GM23248 (cell line): ENCODE measurements at regions of chr1 and their contacts with region 1.

Region 1: DNA sequence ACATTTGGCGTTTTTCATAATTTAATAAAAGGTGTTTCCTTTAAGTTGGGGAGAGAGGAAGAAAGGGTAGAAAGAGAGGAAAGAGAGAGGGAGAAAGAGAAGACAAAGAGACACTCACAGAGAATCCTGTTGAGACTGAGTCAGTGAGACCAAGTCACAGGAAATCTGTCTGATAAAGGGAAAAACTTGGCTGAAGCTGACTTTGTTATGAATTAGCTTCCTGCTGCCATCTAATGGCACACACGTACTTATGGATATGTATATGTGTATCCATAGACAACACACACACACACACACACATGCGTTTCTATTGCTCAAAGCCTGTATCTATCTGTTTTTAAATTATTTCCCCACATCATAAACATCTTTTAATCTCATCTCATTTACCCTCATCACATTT is 42.5 kb upstream of the DISC1 start:
- DNase-seq: peak; percentile 80
- H3K4me3 ChIP-seq: no peak overlapping the region
- H3K27ac ChIP-seq: no peak overlapping the region
- H3K4me1 ChIP-seq: peaks cover 4% of the 10 kb centered on the region
- H3K27me3 ChIP-seq: no peaks in the 10 kb centered on the region

Region 2: DNA sequence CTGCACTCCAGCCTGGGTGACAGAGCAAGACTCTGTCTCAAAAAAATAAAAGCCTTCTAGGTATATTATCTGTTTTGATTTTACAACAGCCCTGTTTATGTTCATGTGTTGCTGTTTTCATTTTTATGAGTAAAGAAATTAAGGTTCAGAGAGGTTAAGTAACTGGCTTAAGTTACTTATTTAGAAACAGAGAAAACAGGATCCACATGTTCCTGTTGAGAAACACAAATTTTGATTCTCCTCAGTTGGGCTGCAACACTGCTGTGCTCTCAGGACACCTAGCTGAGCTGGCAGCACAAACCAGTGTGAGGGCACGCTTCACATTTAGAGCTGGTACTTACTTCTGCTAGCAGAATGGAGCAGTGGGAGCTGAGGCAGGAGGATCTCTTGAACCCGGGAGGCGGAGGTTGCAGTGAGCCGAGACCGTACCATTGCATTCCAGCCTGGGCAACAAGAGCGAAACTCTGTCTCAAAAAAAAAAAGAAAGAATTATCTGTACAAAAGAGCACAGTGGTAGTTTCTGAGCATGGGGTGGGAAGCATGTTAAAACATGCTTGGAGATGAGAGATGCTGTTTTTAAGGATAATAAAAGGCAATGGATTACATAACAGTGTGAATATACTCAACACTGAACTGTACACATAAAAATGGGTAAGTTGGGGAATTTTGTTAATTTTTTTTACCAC is 243.7 kb before region 1 on chr1:
- in situ Hi-C with region 1: loop called (anchors 10 kb)
- DNase-seq: no peak
- H3K4me3 ChIP-seq: no peak overlapping the region
- H3K27ac ChIP-seq: no peak overlapping the region
- H3K4me1 ChIP-seq: peaks cover 18% of the 10 kb centered on the region; the same call in 1 of the 2 replicates
- H3K27me3 ChIP-seq: no peaks in the 10 kb centered on the region